ENCODE measurements at regions of chr17 and their contacts with region 1.

Region 1: DNA sequence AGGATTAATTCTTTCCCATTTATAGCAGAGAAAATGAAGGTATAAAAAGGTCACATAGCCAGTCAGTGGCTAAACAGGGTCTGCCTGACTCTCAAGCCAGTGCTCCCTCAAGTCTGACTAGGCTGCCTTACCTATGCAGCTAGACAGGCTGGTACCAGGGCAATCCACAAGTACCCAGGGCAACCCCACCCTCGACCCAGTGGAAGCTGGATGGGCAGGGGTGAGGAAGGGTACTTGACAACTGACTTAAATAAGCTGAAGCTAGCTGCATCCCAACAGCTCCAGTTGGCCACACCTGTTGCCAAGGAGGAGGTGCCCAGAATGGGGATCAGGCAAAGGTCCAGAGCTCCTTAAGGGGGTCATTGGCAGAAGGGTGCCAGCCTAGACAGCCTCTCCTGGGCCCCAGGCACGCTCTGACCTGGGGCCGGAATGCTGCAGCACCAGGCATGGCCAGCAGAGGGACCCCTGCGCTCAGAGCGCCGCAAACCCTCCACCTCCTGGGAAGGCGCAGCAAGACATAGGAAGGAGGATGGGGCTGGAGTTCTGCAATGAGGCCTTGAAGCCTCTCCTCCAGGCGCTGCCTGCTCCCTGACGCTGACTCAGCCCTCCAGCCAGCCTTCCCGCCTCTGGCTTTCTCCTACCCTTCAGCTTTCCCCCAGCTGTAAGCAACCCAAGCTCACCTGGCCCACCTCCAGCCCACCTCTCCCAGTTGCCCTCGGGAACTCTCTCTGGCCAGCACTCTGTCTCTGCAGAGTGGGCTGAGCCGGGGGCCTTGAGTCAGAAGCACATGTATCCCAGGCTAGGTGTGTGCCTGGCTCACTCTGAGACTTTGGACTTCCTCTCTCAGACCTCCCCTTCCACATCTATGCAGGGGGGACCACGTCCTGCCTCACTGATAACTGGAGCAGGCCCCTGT is 28.8 kb downstream of the MPP2 start:
- DNase-seq: no peak
- ATAC-seq: peak; percentile 98
- H3K4me3 ChIP-seq: no peak overlapping the region
- H3K27ac ChIP-seq: no peak overlapping the region
- H3K4me1 ChIP-seq: no peaks in the 10 kb centered on the region
- H3K27me3 ChIP-seq: no peaks in the 10 kb centered on the region
- CTCF ChIP-seq: peak; percentile 84 to 99 (median 95)
- EP300 ChIP-seq: no peak
- POLR2A ChIP-seq: no peak
- RAD21 ChIP-seq: peak; percentile 63

Region 2: DNA sequence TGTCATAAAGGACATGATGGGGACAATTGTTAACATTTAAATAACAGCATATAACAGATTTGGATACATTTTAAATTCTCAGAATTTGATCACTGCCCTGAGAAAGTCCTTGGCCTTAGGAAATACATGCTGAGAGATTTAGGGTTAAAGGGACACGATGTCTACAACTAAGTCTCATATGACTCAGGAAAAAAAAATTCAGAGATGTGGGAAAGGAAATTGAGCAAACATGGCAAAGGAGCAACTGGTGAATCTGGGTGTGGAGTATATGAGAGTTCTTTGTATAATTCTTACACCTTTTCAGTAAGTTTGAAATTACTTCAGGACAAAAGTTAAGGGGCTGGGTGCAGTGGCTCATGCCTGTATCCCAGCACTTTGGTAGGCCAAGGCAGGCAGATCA is 63.8 kb before region 1 on chr17:
- CTCF ChIA-PET with region 1: no interaction called
- POLR2A ChIA-PET with region 1: no interaction called
- RAD21 ChIA-PET with region 1: no interaction called
- SMC1A ChIA-PET with region 1: no interaction called
- in situ Hi-C with region 1: no loop called
- intact Hi-C with region 1: no loop called
- DNase-seq: no peak
- ATAC-seq: no peak
- H3K4me3 ChIP-seq: no peak overlapping the region
- H3K27ac ChIP-seq: no peak overlapping the region
- H3K4me1 ChIP-seq: no peaks in the 10 kb centered on the region
- H3K27me3 ChIP-seq: peaks cover 2 to 3% of the 10 kb centered on the region in 2 experiments; a peak in 3 of 4 replicates
- CTCF ChIP-seq: no peak
- EP300 ChIP-seq: no peak
- POLR2A ChIP-seq: no peak
- RAD21 ChIP-seq: no peak

Region 3: GRCh38 chr17:43952717-43953666 is 74.5 kb after region 1 on chr17:
- CTCF ChIA-PET with region 1: no interaction called
- POLR2A ChIA-PET with region 1: no interaction called
- RAD21 ChIA-PET with region 1: no interaction called
- SMC1A ChIA-PET with region 1: no interaction called
- in situ Hi-C with region 1: no loop called
- intact Hi-C with region 1: no loop called
- DNase-seq: no peak
- ATAC-seq: no peak
- H3K4me3 ChIP-seq: no peak overlapping the region
- H3K27ac ChIP-seq: no peak overlapping the region
- H3K4me1 ChIP-seq: no peaks in the 10 kb centered on the region
- H3K27me3 ChIP-seq: peaks cover 0 to 6% of the 10 kb centered on the region in 2 experiments; a peak in 2 of 4 replicates
- CTCF ChIP-seq: no peak
- EP300 ChIP-seq: no peak
- POLR2A ChIP-seq: no peak
- RAD21 ChIP-seq: no peak

Region 4: DNA sequence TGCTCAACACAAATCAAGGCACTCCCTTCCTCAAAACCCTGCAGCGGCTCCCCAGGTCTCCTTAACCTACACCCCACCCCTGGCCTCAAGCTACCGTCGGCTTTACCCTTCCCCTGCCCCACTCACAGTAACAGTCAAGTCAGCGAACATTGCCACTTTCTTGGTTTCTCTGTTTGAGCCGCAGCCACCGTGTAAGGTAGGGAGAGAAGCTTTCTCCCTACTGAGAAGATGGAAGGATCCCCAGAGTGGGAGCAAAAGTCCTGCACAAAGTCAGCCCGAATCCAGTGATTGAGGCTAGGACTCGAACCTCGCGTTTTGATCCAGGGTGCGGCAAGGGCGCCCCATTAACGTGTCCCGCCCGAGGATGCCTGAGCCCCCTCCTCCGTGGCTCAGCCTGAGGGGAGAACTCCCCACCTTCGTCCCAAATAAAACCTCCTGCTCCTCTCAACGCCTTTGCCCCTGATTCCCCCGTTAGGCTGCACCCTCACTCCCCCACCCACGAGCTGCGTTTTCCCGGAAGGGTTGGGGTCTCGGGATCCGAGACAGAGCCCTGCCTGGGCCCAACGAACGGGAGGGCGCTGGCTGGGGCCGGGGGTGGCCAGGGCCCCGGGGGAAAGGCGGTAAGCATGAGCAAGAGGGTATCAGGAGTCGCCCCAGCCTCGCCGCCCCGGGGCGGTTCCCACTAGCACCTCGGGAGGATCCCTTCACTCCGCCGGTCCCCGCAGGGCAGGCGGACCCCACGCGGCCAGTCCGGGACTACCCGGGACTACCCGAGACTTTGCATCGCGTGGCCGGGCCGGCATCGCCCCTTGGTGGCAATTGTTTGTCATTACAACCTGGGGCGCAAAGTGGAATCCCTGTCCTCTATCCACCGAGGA is 116.0 kb after region 1 on chr17:
- CTCF ChIA-PET with region 1: interaction called, 6 read pairs
- POLR2A ChIA-PET with region 1: no interaction called
- RAD21 ChIA-PET with region 1: no interaction called
- SMC1A ChIA-PET with region 1: no interaction called
- in situ Hi-C with region 1: no loop called
- intact Hi-C with region 1: loop called (anchors 10 kb)
- DNase-seq: no peak
- ATAC-seq: peak; percentile 94
- H3K4me3 ChIP-seq: no peak overlapping the region
- H3K27ac ChIP-seq: no peak overlapping the region
- H3K4me1 ChIP-seq: no peaks in the 10 kb centered on the region
- H3K27me3 ChIP-seq: peaks cover 4 to 6% of the 10 kb centered on the region in 2 experiments; a peak in 3 of 4 replicates
- CTCF ChIP-seq: peak; percentile 68 to 80 (median 80)
- EP300 ChIP-seq: no peak
- POLR2A ChIP-seq: no peak
- RAD21 ChIP-seq: peak; percentile 85

Region 5: DNA sequence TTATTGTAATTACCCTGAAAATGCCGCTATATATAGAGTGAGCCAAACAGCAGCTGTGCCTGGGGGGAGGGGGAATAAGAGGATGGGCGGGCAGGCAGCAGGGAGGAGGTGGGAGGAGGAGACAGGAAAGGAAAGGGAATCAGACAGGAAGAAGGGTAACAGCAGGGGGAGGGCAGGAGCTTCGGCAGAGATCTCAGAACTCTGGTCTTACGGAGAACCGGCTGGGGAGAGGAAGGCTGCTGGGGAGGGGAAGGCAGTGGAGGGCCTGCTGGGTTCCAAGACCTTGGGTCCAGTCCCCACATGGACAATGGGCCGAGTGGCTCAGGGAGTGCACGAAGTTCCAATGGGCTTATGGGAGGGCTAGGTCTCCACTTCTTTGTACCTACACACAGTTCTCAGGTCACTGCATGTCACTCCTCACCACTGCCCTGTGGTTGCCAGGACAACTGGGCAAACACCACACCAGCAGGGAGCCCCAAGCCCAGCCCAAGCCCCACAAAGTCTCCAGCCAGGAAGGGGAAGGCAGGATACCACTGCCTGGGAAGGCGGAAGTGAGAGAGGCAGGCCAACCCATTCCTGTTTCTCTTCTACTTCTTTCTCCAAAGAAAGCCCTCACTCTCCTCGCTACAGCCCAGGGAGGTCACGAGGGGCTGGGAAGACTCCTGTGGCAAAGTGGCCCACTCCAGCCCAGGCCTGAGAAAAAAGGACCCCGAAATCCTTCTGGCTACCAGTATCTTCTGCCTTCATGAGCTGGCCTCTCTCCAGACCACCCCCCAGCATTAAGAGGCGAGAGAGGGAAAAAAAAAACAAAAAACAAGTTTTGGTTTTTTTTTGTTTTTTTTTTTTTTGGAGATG is 217.4 kb after region 1 on chr17:
- CTCF ChIA-PET with region 1: no interaction called
- POLR2A ChIA-PET with region 1: no interaction called
- RAD21 ChIA-PET with region 1: no interaction called
- SMC1A ChIA-PET with region 1: no interaction called
- in situ Hi-C with region 1: no loop called
- intact Hi-C with region 1: no loop called
- DNase-seq: no peak
- ATAC-seq: peak; percentile 80
- H3K4me3 ChIP-seq: peak overlapping the region; percentile 31; the same call in 1 of the 2 replicates
- H3K27ac ChIP-seq: peak overlapping the region; percentile 67
- H3K4me1 ChIP-seq: peaks cover 24% of the 10 kb centered on the region
- H3K27me3 ChIP-seq: no peaks in the 10 kb centered on the region
- CTCF ChIP-seq: no peak
- EP300 ChIP-seq: no peak
- POLR2A ChIP-seq: 0 out of 2 replicates have a peak, but pooled peaks have one; percentile 28
- RAD21 ChIP-seq: no peak

Measured in GM12878 (cell line).